ENCODE measurements at regions of chr4 and their contacts with region 1.

Region 1: DNA sequence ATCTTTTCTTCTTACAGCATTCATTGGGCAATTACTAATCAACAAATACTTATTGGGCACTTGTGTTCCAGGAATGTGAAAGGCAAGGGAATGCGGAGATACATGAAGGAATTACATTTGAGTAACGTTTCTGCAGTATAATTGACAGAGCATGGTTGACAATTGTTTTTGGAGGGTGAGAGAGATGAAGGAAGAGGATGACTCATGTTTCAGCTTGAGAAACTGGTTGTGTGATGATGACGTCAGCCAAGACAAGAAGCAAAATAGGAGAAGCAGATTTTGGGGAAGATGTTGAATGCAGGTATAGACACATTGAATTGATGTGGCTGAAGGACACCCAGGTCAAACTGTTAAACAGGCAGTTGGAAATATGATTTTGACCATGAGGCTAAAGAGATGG is 8.0 kb upstream of the CPEB2 start:
- DNase-seq: no peak
- ATAC-seq: no peak
- H3K4me3 ChIP-seq: no peak overlapping the region
- H3K27ac ChIP-seq: no peak overlapping the region
- H3K4me1 ChIP-seq: no peaks in the 10 kb centered on the region
- H3K27me3 ChIP-seq: peaks cover 0 to 7% (median 0%) of the 10 kb centered on the region in 3 donors
- CTCF ChIP-seq: no peak

Region 2: DNA sequence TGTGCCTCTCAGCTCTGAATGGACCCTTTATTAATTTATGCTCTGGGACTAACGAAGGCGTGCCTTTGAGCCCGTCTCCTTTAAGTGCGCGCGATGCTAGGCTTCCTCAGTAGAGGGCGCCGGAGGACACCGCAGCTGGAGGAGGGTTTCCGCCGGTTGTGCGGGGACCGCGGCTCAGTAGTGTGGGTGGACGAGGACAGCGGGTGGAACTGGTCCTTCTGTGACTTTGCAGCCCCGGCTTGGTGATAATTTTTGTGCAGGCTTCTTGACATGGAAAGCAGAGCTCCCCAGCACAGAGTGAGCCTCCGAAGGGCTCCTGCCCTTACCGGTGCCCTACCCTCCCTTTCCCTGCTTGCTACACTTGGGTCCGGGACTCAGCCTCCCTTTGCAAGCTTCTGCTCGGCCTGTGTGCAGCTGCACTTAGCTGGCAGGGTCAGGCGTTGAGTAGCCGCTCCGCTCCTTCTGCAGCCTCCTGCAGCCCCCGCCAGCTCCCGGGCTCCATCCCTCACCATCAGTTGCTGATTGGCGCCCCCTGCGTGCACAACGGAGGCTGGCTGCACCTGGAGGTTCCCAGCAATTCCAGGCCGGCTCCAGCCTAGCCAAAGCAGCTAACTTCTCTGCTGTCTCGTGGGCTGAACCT is 1340.0 kb before region 1 on chr4:
- intact Hi-C with region 1: loop called in 1 of 2 experiments (anchors 10 kb)
- DNase-seq: peak; percentile 75 to 86
- ATAC-seq: peak; percentile 81 to 98 (median 94)
- H3K4me3 ChIP-seq: peak overlapping the region; percentile 66
- H3K27ac ChIP-seq: no peak overlapping the region
- H3K4me1 ChIP-seq: peaks cover 5% of the 10 kb centered on the region
- H3K27me3 ChIP-seq: peaks cover 0 to 2% (median 0%) of the 10 kb centered on the region in 3 donors
- CTCF ChIP-seq: peak; percentile 74

Region 3: GRCh38 chr4:14862891-14863290 is 131.3 kb before region 1 on chr4:
- intact Hi-C with region 1: loop called in 1 of 2 experiments (anchors 10 kb)
- DNase-seq: peak; percentile 23 to 65
- ATAC-seq: peak; percentile 78 to 90 (median 84)
- H3K4me3 ChIP-seq: peak overlapping the region; percentile 55
- H3K27ac ChIP-seq: peak overlapping the region; percentile 23
- H3K4me1 ChIP-seq: peaks cover 14% of the 10 kb centered on the region
- H3K27me3 ChIP-seq: no peaks in the 10 kb centered on the region
- CTCF ChIP-seq: no peak

Measured in psoas muscle (tissue), 8 donors.